Left cardiac atrium (tissue), 4 donors: ENCODE measurements at regions of chr6 and their contacts with region 1.

Region 1: GRCh38 chr6:166619912-166620311 is 7.1 kb downstream of the RPS6KA2 start:
- DNase-seq: no peak
- ATAC-seq: peak in 1 of 2 donors; percentile 78

Region 2: GRCh38 chr6:166556871-166557322 is 63.0 kb before region 1 on chr6:
- intact Hi-C with region 1: loop called (anchors 10 kb)
- DNase-seq: peak; percentile 86
- ATAC-seq: peak; percentile 96 to 98